Activated T-helper 2 cell treated with anti-CD3 and anti-CD28 coated beads, Interferon-gamma antibody, Interleukin-2, Interleukin-4, amounts not matched to agents 10 μg/mL and 5 μg/mL and 100 μg/mL, durations not matched to agents 14 hours and 24 hours and 36 hours (primary cell): ENCODE measurements at regions of chr11 and their contacts with region 1.

Region 1: DNA sequence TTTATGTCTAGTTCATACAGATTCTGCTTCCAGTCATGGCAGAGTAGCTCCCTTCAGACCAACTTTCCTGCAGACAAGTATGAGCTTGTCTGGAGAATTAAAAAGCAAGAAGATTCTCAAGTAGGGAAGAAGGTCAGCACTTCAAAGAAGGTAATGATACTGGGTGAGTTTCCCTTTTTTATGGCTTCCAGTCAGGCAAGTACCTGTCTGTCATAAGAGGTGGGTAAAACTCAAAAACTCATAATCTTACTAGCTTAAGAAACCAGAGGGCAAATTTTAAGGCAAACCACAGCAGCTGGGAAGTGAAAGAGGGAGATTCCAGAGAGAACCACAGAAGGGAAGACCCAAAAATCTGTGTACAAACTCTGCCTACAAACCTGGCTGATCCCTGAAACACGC is 54.2 kb downstream of the DENND5A start:
- DNase-seq: no peak
- H3K4me3 Mint-ChIP-seq: no peak overlapping the region
- H3K27ac Mint-ChIP-seq: peak overlapping the region; percentile 80
- H3K4me1 Mint-ChIP-seq: peaks cover 75% of the 10 kb centered on the region
- H3K27me3 Mint-ChIP-seq: no peaks in the 10 kb centered on the region

Region 2: DNA sequence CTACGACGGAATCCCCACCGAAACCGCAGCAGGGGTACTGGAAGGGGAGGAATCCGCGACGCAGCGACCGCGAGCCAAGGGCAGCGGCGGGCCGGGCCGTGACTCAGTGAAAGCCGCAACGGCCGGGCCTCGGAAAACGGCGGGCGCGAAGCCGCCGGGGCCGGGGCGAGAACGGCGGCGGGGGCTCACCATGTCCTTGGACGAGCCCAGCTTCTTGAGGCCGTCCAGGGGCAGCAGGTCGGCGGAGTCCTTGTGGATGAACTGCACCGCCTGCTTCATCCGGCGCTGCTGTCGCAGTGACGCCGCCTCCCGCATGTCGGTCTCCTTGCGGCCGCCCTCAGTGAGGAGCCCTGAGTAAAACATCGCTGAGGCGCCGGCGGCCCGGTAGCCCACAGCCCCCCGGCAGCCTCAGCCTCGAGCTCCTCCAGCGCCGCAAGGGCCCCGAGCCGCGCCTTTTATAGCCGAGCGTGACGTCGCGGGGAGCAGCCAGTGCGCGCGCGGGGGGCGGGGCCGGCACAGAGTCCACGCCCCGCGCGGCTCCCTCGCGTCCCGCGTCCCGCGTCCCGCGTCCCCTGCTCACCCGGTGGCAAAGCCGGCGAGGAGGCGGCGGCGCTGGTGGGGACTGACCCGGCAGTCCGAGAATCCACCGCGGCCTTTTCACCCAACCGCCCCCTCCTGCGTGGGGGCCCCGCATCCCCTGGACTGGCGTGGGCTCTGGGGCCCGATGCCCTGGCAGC is 207.2 kb before region 1 on chr11 and contains the start of gene NRIP3:
- intact Hi-C with region 1: loop called (anchors 1 kb)
- DNase-seq: peak; percentile 71
- H3K4me3 Mint-ChIP-seq: peak within 1 kb of the TSS; percentile 75
- H3K27ac Mint-ChIP-seq: peak within 1 kb of the TSS; percentile 23
- H3K4me1 Mint-ChIP-seq: peaks cover 29% of the 10 kb centered on the region
- H3K27me3 Mint-ChIP-seq: peaks cover 51% of the 10 kb centered on the region
- total RNA-seq, gene NRIP3: 5.0 and 5.5 TPM in 2 replicates

Region 3: DNA sequence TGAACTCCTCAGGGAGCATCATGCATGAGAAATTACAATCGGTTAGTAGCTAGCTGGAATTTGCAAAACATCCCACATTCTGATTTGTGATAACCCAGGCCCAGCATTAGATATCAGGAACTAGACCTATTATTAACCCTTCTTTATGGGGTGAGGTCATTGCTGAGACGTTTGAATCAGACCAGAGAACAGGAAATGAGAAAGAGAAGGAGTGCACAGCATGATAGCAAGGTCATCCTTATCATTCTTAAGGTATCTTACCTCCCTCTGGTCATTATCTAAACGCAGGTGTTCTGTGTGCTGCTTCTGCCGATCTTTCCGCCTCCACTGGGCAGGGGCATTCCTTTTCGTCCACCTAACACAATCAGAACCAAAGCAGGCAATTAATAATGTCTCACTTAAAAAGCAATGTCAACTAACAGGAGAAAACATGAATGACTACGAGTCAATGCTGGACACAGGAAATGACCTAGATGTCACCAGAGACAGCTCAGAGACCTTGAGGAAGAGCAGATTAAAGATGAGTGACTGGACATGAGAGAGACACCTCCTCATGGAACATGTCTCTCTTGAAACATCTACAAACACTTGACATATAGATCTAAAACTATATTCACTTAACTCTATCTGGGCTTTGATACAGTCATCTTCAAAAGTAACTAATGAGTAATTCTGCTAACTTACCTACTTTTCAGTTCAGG is 41.2 kb before region 1 on chr11:
- intact Hi-C with region 1: loop called (anchors 5 kb)
- DNase-seq: no peak
- H3K4me3 Mint-ChIP-seq: no peak overlapping the region
- H3K27ac Mint-ChIP-seq: peak overlapping the region; percentile 30
- H3K4me1 Mint-ChIP-seq: peaks cover 28% of the 10 kb centered on the region
- H3K27me3 Mint-ChIP-seq: no peaks in the 10 kb centered on the region

Region 4: DNA sequence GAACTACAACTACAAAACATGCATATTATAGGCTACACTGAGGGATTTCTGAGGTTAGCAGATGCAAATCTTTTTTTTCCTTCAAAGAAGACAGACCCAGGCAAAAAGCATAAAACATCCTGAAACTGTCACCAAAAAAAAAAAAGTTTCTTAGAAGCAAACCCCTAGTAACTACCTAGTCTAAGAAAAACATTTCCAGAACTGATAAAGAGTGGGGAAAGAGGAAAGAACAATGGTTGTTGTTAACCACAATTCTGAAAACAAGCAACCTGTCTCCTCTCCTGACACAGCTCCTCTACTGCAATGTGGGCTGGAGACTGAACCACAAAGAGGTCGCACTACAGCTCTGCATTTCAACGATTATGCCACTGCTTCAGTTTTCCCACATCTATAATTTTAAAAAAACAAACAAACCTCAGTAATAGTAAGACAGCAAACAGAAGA is 39.2 kb after region 1 on chr11:
- intact Hi-C with region 1: loop called (anchors 1 kb)
- DNase-seq: peak; percentile 32
- H3K4me3 Mint-ChIP-seq: peak overlapping the region; percentile 53
- H3K27ac Mint-ChIP-seq: peak overlapping the region; percentile 73
- H3K4me1 Mint-ChIP-seq: peaks cover 51% of the 10 kb centered on the region
- H3K27me3 Mint-ChIP-seq: no peaks in the 10 kb centered on the region

Region 5: DNA sequence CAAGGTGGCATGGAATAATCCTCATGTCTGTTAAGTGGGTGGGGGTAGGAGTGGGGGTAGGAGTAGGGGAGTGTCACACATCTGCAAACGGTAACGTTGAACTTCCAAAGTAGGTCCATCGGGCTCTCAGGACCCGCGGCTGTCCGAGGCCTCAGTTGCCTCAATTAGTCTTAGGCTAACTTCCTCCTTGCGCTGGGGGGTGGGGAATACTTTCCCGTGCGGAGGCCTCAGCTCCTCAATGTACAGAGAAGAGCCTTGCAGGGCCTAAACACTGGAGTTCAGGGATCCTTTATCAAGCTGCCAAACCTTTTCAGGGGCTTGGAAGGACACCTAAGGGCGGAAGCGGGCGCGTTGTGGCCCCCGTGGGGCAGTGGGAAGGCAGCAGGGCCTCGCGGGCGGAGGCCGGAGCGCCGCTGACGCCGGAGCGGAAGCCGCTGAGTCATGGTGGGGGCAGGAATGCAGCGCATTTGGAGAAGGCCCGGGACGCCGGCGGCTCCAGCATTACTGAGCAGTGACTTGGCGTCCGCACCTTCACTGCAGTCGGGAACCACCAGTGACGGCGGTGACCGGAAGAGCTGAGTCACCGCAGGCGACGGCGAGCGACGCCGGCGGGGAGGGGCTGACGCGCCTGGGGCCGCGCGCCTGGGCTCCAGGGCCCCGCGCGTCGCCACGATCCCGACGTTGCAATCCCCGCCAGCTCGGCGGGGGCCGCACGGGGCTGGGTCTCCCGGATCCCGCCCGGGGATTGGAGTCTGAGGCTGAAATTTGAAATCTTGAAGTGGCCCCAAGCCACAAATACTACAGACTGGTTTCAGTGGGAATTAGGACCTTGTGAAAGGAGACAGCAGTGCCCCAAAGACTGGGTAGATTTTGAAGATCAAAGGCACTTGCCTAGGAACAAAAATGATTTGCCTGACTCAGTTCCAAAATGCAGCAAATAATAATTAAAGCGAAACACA is 153.3 kb after region 1 on chr11:
- intact Hi-C with region 1: loop called (anchors 5 kb)
- DNase-seq: peak; percentile 72
- H3K4me3 Mint-ChIP-seq: peak overlapping the region; percentile 73
- H3K27ac Mint-ChIP-seq: peak overlapping the region; percentile 84
- H3K4me1 Mint-ChIP-seq: peaks cover 27% of the 10 kb centered on the region
- H3K27me3 Mint-ChIP-seq: no peaks in the 10 kb centered on the region

Region 6: GRCh38 chr11:9565822-9566560 is 355.1 kb after region 1 on chr11:
- intact Hi-C with region 1: loop called (anchors 1 kb)
- DNase-seq: peak; percentile 61
- H3K4me3 Mint-ChIP-seq: peak overlapping the region; percentile 37
- H3K27ac Mint-ChIP-seq: peak overlapping the region; percentile 89
- H3K4me1 Mint-ChIP-seq: peaks cover 26% of the 10 kb centered on the region
- H3K27me3 Mint-ChIP-seq: peaks cover 2% of the 10 kb centered on the region